Activated CD4-positive, alpha-beta T cell treated with anti-CD3 and anti-CD28 coated beads for 36 hours (primary cell): ENCODE measurements at regions of chr19 and their contacts with region 1.

Region 1: GRCh38 chr19:45423589-45424190 is at the start of gene ERCC1:
- DNase-seq: peak; percentile 84
- ATAC-seq: peak; percentile 78
- H3K4me3 Mint-ChIP-seq: peak within 1 kb of the TSS; percentile 92
- H3K27ac Mint-ChIP-seq: peak within 1 kb of the TSS; percentile 95
- H3K4me1 Mint-ChIP-seq: peaks cover 55% of the 10 kb centered on the region
- H3K27me3 Mint-ChIP-seq: peaks cover 2% of the 10 kb centered on the region
- total RNA-seq, gene ERCC1: 58.1 to 71.8 TPM

Region 2: GRCh38 chr19:45283443-45284033 is 140.2 kb before region 1 on chr19:
- CTCF ChIA-PET with region 1: no interaction called
- POLR2A ChIA-PET with region 1: no interaction called
- intact Hi-C with region 1: no loop called
- DNase-seq: no peak
- ATAC-seq: no peak
- H3K4me3 Mint-ChIP-seq: no peak overlapping the region
- H3K27ac Mint-ChIP-seq: no peak overlapping the region
- H3K4me1 Mint-ChIP-seq: no peaks in the 10 kb centered on the region
- H3K27me3 Mint-ChIP-seq: no peaks in the 10 kb centered on the region

Region 3: DNA sequence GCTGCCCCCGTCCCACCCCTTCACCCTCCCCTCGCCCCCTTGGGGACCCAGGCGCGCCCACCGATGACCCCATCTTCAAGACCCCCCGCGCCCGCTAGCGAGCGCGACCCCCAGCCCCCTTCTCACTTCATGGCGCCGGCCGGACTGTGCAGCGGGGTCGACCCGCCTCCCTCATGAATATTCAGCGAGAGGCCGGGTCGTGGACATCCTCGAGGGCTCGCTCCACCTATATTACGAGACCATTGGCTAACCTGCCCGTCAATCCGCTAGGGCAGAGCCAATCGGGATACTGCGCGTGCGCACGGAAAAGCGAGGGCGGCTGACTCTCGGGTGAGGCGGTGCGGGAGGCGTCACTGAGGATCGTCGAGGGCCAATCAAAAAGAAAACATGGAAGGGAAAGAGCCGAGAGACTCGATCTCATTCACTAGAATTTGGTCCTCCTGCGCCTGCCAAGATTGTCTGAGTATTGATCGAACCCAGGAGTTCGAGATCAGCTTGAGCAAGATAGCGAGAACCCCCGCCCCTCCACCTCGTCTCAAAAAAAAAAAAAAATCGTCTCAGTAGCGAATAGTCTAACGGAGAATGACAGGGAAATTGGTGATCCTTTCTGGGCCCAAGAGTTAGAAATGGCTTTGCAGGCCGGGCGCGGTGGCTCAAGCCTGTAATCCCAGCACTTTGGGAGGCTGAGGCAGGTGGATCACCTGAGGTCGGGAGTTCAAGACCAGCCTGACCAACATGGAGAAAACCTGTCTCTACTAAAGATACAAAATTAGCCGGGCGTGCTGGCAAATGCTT is 53.1 kb before region 1 on chr19 and contains the start of gene ERCC2:
- CTCF ChIA-PET with region 1: interaction called, 3 read pairs
- POLR2A ChIA-PET with region 1: no interaction called
- intact Hi-C with region 1: loop called in 1 of 2 experiments (anchors 1 kb)
- DNase-seq: peak; percentile 100
- ATAC-seq: peak; percentile 100
- H3K4me3 Mint-ChIP-seq: peak within 1 kb of the TSS; percentile 79
- H3K27ac Mint-ChIP-seq: peak within 1 kb of the TSS; percentile 97
- H3K4me1 Mint-ChIP-seq: peaks cover 8% of the 10 kb centered on the region
- H3K27me3 Mint-ChIP-seq: no peaks in the 10 kb centered on the region
- total RNA-seq, gene ERCC2: 27.5 to 30.4 TPM

Region 4: GRCh38 chr19:45391340-45391739 is 32.4 kb before region 1 on chr19:
- CTCF ChIA-PET with region 1: no interaction called
- POLR2A ChIA-PET with region 1: no interaction called
- intact Hi-C with region 1: no loop called
- DNase-seq: no peak
- ATAC-seq: peak; percentile 47
- H3K4me3 Mint-ChIP-seq: no peak overlapping the region
- H3K27ac Mint-ChIP-seq: no peak overlapping the region
- H3K4me1 Mint-ChIP-seq: no peaks in the 10 kb centered on the region
- H3K27me3 Mint-ChIP-seq: peaks cover 7% of the 10 kb centered on the region

Region 5: GRCh38 chr19:45469132-45469944 is 45.6 kb after region 1 on chr19:
- CTCF ChIA-PET with region 1: interaction called, 4 read pairs
- POLR2A ChIA-PET with region 1: interaction called, 9 read pairs
- intact Hi-C with region 1: loop called in 1 of 2 experiments (anchors 1 kb)
- DNase-seq: peak; percentile 97
- ATAC-seq: peak; percentile 82
- H3K4me3 Mint-ChIP-seq: peak overlapping the region; percentile 78
- H3K27ac Mint-ChIP-seq: peak overlapping the region; percentile 86
- H3K4me1 Mint-ChIP-seq: peaks cover 29% of the 10 kb centered on the region
- H3K27me3 Mint-ChIP-seq: peaks cover 11% of the 10 kb centered on the region

Region 6: DNA sequence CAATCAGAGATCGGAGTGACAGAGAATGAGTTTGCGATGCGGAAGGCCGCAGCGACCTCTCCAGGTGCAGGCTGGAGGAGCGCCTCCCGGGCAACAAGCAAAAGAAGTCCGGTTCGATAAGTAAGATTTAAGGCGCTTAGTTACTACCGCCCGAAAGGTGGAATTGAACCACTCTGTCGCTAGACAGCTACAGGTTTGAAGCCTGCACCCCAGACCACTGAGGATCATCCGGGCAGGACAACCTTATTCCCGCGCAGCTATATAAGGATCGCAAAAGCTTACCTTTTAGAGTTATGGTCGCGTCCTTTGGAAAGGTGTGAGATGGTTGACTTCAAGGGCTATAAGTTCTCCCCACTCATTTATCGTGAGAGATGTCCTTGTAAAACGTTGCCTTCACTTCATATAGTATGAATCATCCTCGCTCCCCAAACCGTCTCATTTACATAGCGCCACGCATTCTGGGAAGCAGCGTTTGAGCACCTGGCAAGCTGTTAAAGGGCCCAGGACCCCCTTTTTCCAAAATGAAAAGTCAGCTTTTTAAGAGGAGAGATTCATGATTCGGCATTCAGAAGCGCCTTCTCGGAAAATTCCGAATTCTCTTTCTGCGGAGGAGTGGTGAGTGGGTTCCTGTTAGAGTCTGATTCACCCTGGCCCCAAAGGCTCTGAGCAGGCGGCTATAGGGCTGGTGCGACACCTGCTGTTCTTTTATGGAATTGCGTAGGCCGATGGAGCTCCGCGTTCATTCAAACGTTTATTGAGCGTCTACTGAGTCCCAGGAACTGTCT is 55.0 kb after region 1 on chr19:
- CTCF ChIA-PET with region 1: interaction called, 15 read pairs
- POLR2A ChIA-PET with region 1: interaction called, 3 read pairs
- intact Hi-C with region 1: loop called (anchors 1 kb)
- DNase-seq: peak; percentile 95
- ATAC-seq: peak; percentile 86
- H3K4me3 Mint-ChIP-seq: peak overlapping the region; percentile 60
- H3K27ac Mint-ChIP-seq: peak overlapping the region; percentile 73
- H3K4me1 Mint-ChIP-seq: peaks cover 24% of the 10 kb centered on the region
- H3K27me3 Mint-ChIP-seq: peaks cover 4% of the 10 kb centered on the region

Region 7: DNA sequence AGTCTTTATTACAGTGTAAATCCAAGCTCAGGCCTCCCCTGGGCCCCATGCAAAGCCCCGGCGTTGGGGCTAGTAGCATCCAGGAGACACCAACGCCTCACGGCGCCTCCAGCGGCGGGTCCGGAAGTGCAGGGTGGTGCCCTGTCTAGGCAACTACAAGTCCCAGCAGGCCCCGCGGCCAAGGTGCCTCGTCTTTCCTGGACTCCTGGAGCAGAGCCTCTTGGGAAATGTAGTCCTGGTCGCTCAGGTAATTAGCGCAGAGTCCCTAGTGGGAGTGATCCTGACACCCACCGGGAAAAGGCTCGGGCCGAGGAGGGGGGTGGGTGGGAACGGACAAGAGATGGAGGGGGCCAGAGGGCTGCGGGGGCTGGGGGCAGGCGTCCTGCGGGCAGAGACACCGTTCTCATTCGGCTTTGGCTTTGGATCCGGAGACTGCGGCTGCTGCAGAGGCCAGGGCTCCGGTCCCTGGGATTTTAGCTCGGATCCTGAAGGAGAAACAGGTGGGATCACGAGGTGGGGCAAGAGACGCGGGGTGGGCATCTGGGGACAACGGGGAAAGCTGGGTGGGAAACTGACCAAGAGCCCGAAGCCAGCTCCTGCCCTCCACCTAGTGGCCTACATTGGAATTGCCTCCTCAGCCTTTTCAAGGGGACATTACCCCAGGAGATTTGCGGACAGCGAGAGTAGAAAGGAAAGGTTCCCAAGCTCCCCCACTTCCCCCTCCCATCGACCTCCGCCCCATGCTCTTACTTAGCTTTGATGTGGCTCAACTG is 61.8 kb after region 1 on chr19:
- CTCF ChIA-PET with region 1: interaction called, 13 read pairs
- POLR2A ChIA-PET with region 1: no interaction called
- intact Hi-C with region 1: loop called in 1 of 2 experiments (anchors 1 kb)
- DNase-seq: peak; percentile 100
- ATAC-seq: peak; percentile 99
- H3K4me3 Mint-ChIP-seq: peak overlapping the region; percentile 83
- H3K27ac Mint-ChIP-seq: peak overlapping the region; percentile 91
- H3K4me1 Mint-ChIP-seq: peaks cover 13% of the 10 kb centered on the region
- H3K27me3 Mint-ChIP-seq: peaks cover 2% of the 10 kb centered on the region

Region 8: DNA sequence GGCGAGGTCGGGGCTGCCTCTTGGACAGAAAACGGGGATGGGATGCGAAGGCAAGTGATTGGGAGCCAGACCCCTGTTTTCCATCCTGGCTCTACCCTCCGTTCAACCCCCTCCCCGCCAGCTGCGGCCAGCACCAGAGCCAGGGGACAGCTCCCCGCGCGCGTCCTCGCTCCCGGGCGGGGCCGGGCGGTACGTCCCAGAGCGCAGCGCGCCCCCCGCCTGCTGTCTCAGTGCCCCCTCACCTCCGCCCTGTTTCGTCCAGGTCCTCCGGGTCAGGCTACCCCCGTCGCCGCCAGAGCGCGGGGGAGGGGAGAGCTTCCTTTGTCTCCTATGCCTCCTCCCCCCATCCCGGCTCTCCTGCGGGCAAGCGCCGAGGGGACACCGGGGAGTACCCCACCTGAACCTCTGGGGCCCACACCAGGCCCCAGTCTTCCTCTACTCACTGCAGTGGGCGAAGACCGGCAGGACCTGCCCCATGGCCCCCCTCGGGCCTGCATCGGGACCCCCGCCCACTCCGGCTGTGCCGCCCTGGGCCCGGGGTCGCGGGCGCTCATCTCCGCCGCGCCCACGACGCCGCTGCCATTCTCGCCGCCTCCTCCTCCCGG is 72.8 kb after region 1 on chr19:
- CTCF ChIA-PET with region 1: no interaction called
- POLR2A ChIA-PET with region 1: no interaction called
- intact Hi-C with region 1: no loop called
- DNase-seq: peak; percentile 74
- ATAC-seq: peak; percentile 1
- H3K4me3 Mint-ChIP-seq: peak overlapping the region; percentile 6
- H3K27ac Mint-ChIP-seq: no peak overlapping the region
- H3K4me1 Mint-ChIP-seq: peaks cover 43% of the 10 kb centered on the region
- H3K27me3 Mint-ChIP-seq: peaks cover 31% of the 10 kb centered on the region

Region 9: GRCh38 chr19:45558399-45558878 is 134.7 kb after region 1 on chr19:
- CTCF ChIA-PET with region 1: no interaction called
- POLR2A ChIA-PET with region 1: no interaction called
- intact Hi-C with region 1: loop called in 1 of 2 experiments (anchors 5 kb)
- DNase-seq: peak; percentile 87
- ATAC-seq: peak; percentile 99
- H3K4me3 Mint-ChIP-seq: no peak overlapping the region
- H3K27ac Mint-ChIP-seq: peak overlapping the region; percentile 5
- H3K4me1 Mint-ChIP-seq: peaks cover 25% of the 10 kb centered on the region
- H3K27me3 Mint-ChIP-seq: no peaks in the 10 kb centered on the region

Region 10: GRCh38 chr19:45615795-45616708 is 192.4 kb after region 1 on chr19:
- CTCF ChIA-PET with region 1: no interaction called
- POLR2A ChIA-PET with region 1: no interaction called
- intact Hi-C with region 1: loop called in 1 of 2 experiments (anchors 1 kb)
- DNase-seq: peak; percentile 95
- ATAC-seq: peak; percentile 86
- H3K4me3 Mint-ChIP-seq: no peak overlapping the region
- H3K27ac Mint-ChIP-seq: peak overlapping the region; percentile 65
- H3K4me1 Mint-ChIP-seq: peaks cover 24% of the 10 kb centered on the region
- H3K27me3 Mint-ChIP-seq: no peaks in the 10 kb centered on the region